KBM-7 (cell line): ENCODE measurements at regions of chr22 and their contacts with region 1.

Region 1: DNA sequence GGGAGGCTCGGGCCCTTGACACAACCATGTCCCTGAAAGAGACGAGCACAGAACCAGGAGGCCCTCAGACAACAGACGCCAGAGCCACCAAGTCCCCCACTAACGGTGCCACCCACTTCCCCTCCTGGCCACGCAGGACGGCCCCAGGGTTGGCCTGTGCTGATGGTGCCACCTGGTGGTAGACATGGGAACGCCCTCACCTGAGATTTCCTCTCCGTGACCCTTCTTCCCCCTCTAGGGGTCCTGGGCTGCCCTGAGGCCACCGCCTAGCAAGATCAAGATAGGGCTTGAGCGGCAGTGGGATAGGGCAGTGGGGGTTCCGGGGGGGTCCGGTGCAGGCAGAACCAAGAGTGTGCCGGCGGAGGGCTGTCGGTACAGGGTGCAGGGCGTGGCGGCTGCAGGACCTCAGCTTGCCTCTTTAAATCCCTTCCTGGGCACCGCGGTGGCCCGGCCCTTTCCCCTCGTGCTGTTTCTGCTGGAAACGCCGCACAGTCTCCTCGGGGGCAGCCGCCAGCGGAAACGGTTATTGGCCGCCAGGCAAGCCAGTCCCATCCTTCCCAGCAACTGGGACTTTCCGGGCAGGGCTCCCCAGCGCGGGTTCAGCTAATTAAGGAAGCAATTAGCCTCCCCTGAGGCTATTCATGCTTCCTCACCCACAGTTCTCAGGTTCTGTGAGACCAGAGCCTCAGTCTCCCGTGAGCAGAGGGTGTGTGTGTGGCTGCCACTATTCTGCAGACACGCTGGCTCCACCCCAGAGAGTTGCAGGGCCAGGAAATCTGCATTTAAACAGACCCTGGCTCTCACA is 5.5 kb upstream of the NFAM1 start:
- DNase-seq: peak; percentile 80

Region 2: GRCh38 chr22:42169055-42169469 is 268.6 kb before region 1 on chr22:
- in situ Hi-C with region 1: loop called (anchors 25 kb)
- DNase-seq: peak; percentile 75

Region 3: DNA sequence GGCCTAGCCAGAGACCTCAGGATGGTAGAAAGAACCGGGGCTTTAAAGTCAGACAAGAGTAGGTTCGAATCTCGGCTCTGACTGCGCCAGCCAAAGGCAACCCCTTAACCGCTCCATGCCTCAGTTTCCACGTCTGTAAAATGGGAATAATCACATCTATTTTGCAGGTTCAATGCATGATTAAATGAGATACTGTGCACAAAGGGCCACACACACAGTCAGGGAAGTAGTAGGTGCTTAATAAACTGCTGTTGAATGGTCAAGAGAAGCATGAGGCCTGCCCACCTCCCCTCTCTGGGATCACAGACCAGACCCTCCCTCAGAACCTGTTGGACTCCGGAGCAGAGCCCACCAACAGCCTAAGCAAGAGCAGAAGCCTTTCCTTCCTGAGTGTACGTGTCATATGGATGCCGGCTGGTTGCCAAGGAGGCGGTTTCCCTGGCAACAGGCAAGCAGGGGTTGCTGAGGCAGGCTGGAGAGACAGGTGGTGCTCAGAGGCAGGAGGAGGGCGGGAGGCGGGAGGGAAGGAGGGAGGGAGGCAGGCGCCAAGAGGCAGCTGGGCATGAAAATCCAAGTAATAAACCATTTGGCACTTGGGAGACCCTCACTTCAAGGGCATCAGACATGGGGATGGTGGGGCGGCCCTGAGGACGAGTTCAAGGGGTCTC is 49.4 kb before region 1 on chr22:
- in situ Hi-C with region 1: no loop called
- DNase-seq: no peak